Activated CD8-positive, alpha-beta T cell treated with anti-CD3 and anti-CD28 coated beads for 36 hours (primary cell): ENCODE measurements at regions of chr1 and their contacts with region 1.

Region 1: GRCh38 chr1:214514032-214514818 is 37.2 kb downstream of the PTPN14 start:
- DNase-seq: no peak
- ATAC-seq: no peak
- H3K4me3 Mint-ChIP-seq: no peak overlapping the region
- H3K27ac Mint-ChIP-seq: no peak overlapping the region
- H3K4me1 Mint-ChIP-seq: no peaks in the 10 kb centered on the region
- H3K27me3 Mint-ChIP-seq: peaks cover 1% of the 10 kb centered on the region
- CTCF ChIP-seq: no peak

Region 2: DNA sequence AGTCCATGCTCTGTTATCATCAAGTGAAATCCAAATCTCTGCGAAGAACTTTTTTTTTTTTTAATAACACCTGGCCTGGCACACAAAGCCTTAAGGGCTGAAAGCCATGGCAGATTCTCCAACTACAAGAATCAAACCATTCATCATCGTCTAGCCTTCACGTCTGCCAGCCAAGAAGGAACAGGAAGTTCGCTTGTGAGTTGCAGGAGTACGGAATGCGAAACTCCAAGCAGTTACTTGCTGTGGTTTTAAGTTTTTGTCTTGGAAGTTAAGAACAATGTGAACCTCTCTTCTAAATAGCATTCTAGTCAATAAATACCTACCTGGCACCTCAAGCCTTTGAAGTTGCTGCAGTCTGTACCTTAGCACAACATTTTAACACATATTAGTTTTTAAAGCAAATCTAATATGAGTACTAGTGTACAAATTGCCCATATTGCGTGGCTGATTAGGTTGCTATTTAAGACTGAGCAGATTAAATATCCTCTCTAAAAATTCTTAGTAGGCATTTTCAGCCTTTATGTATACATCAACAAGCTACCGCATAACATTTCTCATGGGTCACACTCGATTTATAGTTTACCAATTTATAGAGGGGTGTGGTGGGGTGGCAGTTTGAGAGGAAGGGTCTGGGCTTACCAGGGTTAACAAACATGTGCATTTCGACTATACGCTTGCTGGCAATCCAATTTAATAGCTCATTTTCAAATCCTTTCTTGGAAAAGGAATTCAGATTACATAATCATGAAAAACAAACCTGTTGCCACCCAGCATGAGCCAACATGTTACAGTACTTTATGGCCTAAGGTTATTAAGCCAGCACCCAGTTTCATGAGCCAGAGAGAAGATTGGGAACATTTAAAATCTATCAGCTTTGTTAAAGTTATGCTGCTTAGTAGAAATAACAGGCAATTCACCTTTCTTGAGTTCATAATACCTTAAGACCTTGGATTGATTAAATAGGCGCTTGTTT is 59.4 kb after region 1 on chr1:
- CTCF ChIA-PET with region 1: no interaction called
- POLR2A ChIA-PET with region 1: no interaction called
- intact Hi-C with region 1: loop called (anchors 10 kb)
- DNase-seq: no peak
- ATAC-seq: no peak
- H3K4me3 Mint-ChIP-seq: no peak overlapping the region
- H3K27ac Mint-ChIP-seq: no peak overlapping the region
- H3K4me1 Mint-ChIP-seq: no peaks in the 10 kb centered on the region
- H3K27me3 Mint-ChIP-seq: peaks cover 7% of the 10 kb centered on the region
- CTCF ChIP-seq: no peak